Activated CD8-positive, alpha-beta T cell treated with anti-CD3 and anti-CD28 coated beads for 36 hours (primary cell): ENCODE measurements at regions of chr6 and their contacts with region 1.

Region 1: DNA sequence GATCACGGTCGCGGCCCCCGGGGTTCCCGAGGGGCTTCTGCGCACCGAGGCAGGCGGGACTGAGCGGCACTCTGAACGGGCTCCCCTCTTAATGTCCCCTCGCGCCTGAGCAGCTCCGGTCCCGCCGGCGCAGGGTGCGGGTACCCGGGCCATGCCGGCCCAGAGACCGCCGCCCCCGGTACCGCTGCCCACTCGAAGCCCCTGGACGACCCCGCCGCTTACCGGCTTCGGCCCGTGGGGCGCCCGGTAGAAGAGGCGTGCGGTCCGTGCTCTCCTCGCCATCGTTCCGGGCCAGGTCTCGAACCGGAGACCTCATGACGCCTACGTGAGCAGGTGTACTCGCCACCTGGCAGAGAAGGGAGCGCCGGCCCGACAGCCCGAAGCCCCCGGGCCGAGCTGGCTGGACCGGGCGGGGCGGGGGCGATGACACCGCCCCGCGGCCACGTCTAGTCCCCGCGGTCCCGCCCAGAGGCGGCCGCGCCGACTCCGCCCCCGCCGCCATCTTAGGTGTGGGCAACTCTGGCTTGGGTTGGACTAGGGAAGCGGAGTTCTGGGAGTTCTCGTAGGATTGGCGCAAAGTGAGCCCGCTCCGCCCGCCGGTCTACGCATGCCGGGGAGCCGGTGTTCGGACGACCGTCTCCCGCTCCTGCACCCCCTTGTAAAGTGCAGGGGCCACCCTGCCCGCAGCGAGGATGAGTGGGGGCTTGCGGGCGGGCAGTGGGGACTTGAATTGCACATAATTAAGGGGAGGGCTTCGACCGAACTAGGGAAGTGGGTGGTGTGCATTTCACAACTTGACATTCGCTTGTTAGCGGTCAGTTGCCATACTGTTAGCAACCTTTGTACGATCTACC is at the start of gene SLC17A5:
- DNase-seq: peak; percentile 92
- ATAC-seq: peak; percentile 89
- H3K4me3 Mint-ChIP-seq: peak within 1 kb of the TSS; percentile 87
- H3K27ac Mint-ChIP-seq: peak within 1 kb of the TSS; percentile 92
- H3K4me1 Mint-ChIP-seq: peaks cover 31% of the 10 kb centered on the region
- H3K27me3 Mint-ChIP-seq: no peaks in the 10 kb centered on the region
- CTCF ChIP-seq: no peak
- total RNA-seq, gene SLC17A5: 4.2 to 5.0 TPM

Region 2: DNA sequence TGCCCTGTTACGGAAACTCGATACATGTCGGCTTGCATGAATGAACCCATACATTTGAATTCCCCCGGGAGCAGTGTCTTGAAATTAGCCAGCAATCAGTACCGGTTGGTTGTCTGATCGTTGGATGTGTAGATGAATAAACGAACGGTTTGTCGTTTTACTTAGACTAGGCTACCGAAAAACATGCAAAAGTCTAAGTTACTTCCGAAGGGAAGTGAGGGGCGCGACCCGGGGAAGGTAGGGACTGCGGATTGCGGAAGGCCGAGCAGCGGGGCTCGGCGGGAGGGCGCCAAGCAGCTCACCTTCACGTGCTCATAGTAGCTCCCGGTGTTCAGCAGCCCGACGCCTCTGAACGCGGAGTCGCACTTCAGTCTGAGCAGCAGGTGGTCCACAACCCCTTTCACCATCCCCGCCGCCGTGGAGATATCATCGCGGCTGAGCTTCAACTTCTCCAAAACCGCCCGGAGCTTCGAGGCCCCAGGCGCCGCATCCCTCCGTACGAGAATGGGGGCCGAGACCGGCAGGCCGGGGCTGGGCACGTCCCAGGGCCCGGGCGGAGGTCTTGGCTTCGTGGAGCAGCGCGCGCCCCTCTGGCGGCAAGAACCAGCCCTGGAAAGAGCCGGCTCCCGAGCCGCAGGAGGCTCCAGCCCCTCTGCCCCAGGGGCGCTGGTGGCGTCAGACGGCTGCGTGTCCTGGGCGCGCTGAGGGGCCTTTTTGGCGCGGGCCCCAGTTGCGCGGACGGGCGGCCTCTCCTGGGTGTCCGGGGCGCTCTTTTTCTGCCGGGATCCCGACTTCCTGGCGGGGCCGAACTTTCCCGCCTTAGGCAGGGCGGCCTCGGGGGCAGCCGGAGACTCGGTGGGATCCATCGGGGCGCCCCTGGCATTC is 202.3 kb before region 1 on chr6:
- CTCF ChIA-PET with region 1: no interaction called
- POLR2A ChIA-PET with region 1: interaction called, 10 read pairs
- intact Hi-C with region 1: no loop called
- DNase-seq: peak; percentile 62
- ATAC-seq: peak; percentile 52
- H3K4me3 Mint-ChIP-seq: peak overlapping the region; percentile 93
- H3K27ac Mint-ChIP-seq: peak overlapping the region; percentile 91
- H3K4me1 Mint-ChIP-seq: peaks cover 17% of the 10 kb centered on the region
- H3K27me3 Mint-ChIP-seq: no peaks in the 10 kb centered on the region
- CTCF ChIP-seq: no peak

Region 3: GRCh38 chr6:73768558-73768957 is 114.8 kb after region 1 on chr6:
- CTCF ChIA-PET with region 1: no interaction called
- POLR2A ChIA-PET with region 1: no interaction called
- intact Hi-C with region 1: no loop called
- DNase-seq: no peak
- ATAC-seq: no peak
- H3K4me3 Mint-ChIP-seq: no peak overlapping the region
- H3K27ac Mint-ChIP-seq: no peak overlapping the region
- H3K4me1 Mint-ChIP-seq: no peaks in the 10 kb centered on the region
- H3K27me3 Mint-ChIP-seq: no peaks in the 10 kb centered on the region
- CTCF ChIP-seq: no peak